HEK293 (cell line): ENCODE measurements at regions of chr12 and their contacts with region 1.

Region 1: GRCh38 chr12:98516184-98516873 is 939 bp downstream of the TMPO start:
- H3K4me3 ChIP-seq: peak overlapping the region; percentile 97
- H3K27ac ChIP-seq: peak overlapping the region; percentile 98
- H3K4me1 ChIP-seq: peaks cover 11% of the 10 kb centered on the region; the same call in 1 of the 2 replicates
- CTCF ChIP-seq: peak; percentile 87

Region 2: GRCh38 chr12:98503592-98504367 is 12.5 kb before region 1 on chr12:
- CTCF ChIA-PET with region 1: interaction called, 4 read pairs
- POLR2A ChIA-PET with region 1: interaction called, 18 read pairs
- H3K4me3 ChIP-seq: peak overlapping the region; percentile 96
- H3K27ac ChIP-seq: peak overlapping the region; percentile 85
- H3K4me1 ChIP-seq: peaks cover 3% of the 10 kb centered on the region; the same call in 1 of the 2 replicates
- CTCF ChIP-seq: peak; percentile 14; the same call in 1 of the 2 replicates

Region 3: DNA sequence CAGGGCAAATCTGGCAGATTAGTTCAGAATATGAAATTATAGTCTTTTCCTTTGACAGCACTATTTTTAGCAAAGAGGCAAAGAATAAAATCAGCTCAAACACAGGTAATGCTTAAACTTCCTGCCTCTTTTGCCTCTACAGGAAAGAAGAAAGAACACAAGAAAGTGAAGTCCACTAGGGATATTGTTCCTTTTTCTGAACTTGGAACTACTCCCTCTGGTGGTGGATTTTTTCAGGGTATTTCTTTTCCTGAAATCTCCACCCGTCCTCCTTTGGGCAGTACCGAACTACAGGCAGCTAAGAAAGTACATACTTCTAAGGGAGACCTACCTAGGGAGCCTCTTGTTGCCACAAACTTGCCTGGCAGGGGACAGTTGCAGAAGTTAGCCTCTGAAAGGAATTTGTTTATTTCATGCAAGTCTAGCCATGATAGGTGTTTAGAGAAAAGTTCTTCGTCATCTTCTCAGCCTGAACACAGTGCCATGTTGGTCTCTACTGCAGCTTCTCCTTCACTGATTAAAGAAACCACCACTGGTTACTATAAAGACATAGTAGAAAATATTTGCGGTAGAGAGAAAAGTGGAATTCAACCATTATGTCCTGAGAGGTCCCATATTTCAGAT is 16.5 kb after region 1 on chr12:
- CTCF ChIA-PET with region 1: interaction called, 53 read pairs
- POLR2A ChIA-PET with region 1: interaction called, 12 read pairs
- H3K4me3 ChIP-seq: no peak overlapping the region
- H3K27ac ChIP-seq: no peak overlapping the region
- H3K4me1 ChIP-seq: peaks cover under 1% of the 10 kb centered on the region; the same call in 1 of the 2 replicates
- CTCF ChIP-seq: peak; percentile 38